Left colon (tissue), 2 donors: ENCODE measurements at regions of chr1 and their contacts with region 1.

Region 1: DNA sequence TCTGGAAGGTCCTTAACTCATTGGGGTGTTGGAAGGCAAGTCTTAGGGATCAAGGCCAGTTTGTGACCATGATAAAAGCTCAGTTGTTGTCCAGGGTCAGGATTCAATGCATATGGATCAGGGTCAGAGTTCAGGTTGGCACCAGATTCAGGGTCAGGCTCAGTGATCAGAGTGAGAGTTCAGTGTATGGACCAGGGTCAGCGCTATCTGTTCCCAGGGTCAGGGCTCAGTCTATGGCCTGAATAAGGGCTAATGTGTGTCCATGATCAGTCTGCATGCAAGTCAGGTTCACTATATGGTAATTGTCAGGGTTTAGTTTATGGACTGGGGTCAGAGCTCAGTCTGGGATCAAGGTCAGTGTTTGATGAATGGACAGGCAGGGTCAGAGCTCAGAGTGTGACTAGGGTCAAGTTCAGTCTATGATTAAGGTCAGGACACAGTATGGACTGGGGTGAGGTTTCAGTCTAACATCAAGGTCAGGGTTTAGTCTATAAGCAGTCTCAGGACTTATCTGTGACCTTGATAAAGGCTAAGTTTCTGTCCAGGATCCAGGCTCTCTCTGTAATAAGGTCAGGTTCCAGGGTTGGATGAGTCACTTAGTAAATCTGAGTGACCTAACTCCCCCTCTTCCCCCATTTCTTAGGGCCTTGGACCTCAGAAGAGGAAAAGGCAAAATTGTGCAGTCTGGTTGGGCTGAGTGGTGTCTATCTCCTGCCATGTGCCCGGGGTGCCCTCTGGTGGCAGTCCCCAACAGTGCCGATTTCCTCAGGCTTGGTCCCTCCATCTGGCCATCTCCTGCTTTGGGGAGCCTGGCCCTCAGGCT is 23.8 kb downstream of the KNCN start:
- DNase-seq: peak; percentile 71 to 85
- ATAC-seq: peak; percentile 71

Region 2: DNA sequence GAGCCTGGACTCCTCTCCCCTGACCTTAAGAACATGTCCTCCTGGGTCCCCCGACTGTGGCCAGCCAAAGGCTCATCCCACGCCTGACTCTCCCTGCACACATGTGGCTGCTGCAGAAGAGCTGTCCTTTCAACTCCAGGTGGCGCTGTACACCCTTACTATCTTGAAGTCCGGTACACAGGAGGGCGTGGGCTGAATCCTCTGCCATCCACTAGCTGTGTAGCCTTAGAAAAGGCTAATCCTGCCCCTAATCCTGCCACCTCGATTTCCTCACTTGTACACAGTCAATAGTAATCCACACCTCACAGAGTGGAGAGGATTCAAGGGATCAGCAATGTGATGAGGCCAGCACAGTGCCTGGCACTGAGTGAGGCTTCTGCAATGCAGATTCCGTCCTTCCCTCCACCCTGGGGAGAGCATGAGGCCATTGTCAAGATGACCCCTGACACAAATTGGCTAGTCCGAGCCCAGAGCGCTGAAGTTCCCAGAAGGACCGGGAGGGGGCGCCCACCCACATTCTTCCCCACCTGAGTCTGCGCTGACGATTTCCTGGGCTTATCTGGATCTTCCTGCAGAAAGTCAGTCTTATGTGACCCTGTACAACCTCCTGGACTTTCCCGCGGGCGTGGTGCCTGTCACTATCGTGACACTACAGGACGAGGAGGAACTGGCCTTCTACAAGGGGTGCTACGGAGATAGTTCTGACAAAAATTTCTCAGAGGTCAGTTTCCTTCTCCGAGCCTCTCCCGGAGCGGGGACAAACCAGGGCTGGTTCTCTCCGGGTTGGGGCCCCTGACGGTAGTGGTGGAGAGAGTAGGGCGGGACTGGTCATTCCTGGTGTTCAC is 85.1 kb before region 1 on chr1:
- intact Hi-C with region 1: loop called in 1 of 2 experiments (anchors 10 kb)
- DNase-seq: peak; percentile 71 to 83
- ATAC-seq: peak; percentile 82

Region 3: DNA sequence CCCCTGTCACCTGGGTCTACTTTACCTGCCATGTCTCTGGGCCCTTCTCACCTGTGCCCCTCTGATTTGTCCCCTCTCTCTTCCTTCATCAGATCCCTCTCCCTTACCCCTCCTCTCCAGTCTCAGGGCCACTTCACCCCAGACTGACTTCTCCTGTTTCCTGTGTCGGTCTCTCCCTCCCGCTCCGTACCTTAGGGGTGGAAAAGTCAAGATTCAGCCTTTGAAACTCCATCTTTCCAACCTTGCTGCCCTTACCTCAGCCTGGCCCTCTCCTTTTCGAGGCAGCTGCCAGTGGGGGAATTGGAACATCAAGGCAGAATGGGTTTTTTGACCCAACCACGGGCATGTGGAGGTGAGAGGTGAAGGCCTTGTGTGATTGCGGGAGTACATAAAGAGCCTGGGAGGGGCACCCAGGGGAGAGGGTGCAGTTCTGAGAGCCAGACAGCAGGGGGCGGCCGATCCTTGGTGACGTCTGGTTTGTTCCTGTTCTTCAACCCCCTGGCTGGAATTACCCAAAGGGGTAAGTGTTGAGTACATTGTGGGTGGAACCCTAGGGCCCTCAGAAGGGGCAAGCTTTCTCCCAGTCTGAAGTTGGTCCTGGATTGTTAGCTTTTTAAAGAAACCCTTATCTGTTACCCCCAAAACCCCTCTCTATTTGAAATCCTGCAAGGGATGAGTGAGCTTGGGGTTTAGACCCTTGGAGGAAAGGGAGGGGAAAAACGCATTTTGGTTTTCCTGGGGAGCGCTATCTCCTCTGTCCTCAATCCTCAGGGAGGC is 50.3 kb before region 1 on chr1:
- intact Hi-C with region 1: loop called in 1 of 2 experiments (anchors 10 kb)
- DNase-seq: peak; percentile 53 to 77
- ATAC-seq: peak; percentile 90

Region 4: GRCh38 chr1:46622344-46622743 is 94.7 kb after region 1 on chr1:
- intact Hi-C with region 1: no loop called
- DNase-seq: peak in 1 of 2 donors; percentile 57
- ATAC-seq: peak; percentile 77